CD8-positive, alpha-beta T cell (primary cell): ENCODE measurements at regions of chr10 and their contacts with region 1.

Region 1: DNA sequence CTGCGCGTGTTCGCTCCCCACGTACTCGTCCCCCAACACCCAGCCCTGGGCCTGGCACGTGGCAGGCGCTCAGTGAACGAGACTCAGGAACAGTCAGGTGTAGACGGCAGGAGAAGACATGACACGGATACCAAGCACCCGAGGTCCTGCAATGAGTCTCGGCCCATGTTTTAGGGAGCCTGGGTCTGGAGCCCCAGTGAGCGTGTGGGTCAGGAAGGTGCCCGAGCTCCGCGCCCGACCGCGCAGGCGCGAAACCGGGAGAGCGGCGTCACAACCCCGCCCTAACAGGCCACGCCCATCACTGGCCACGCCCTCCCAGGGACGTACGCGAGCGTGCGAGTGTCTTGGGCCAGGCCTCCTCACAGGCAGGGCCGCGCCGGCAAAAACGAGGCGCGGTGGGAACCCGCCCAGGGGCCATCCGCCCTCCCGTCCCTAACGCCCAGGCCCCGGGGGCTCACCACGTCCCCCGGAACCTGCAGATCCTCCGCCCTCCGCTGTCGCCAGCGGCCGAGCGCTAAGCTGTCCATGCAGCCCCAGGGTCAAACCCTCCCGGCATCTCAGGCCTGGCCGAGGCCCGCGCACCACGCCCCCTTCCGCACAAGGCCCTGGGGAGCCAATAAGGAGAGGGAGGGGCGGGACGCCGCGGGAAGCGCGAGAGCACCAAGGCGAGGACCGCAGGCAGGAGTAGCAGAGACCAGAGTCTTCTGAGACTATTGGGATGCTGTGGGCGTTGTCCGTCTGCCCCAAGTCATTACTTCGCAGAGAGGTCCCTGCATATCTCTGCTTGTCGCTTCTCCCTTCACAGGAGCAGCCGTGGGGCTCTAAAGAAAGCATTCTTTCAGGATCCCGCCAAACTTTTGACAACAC is at the start of gene C10orf143:
- DNase-seq: peak; percentile 96 to 100 (median 98)
- ATAC-seq: peak; percentile 76
- H3K4me3 ChIP-seq: peak within 1 kb of the TSS; percentile 88 to 95
- H3K4me3 Mint-ChIP-seq: peak within 1 kb of the TSS; percentile 99
- H3K27ac ChIP-seq: peak within 1 kb of the TSS; percentile 90 to 96
- H3K27ac Mint-ChIP-seq: peak within 1 kb of the TSS; percentile 97
- H3K4me1 ChIP-seq: peaks cover 18% of the 10 kb centered on the region
- H3K4me1 Mint-ChIP-seq: peaks cover 52% of the 10 kb centered on the region
- H3K27me3 ChIP-seq: no peaks in the 10 kb centered on the region
- H3K27me3 Mint-ChIP-seq: no peaks in the 10 kb centered on the region
- CTCF ChIP-seq: no peak
- total RNA-seq, gene C10orf143: 4.5 to 5.2 TPM

Region 2: GRCh38 chr10:128211953-128212727 is 1898.3 kb before region 1 on chr10:
- CTCF ChIA-PET with region 1: no interaction called
- POLR2A ChIA-PET with region 1: no interaction called
- intact Hi-C with region 1: loop called in 1 of 2 experiments (anchors 5 kb)
- DNase-seq: peak; percentile 68 to 90 (median 81)
- ATAC-seq: peak; percentile 77
- H3K4me3 ChIP-seq: peak overlapping the region; percentile 39 to 43
- H3K4me3 Mint-ChIP-seq: peak overlapping the region; percentile 83
- H3K27ac ChIP-seq: no peak overlapping the region
- H3K27ac Mint-ChIP-seq: peak overlapping the region; percentile 66
- H3K4me1 ChIP-seq: peaks cover 8% of the 10 kb centered on the region
- H3K4me1 Mint-ChIP-seq: peaks cover 16% of the 10 kb centered on the region
- H3K27me3 ChIP-seq: no peaks in the 10 kb centered on the region
- H3K27me3 Mint-ChIP-seq: no peaks in the 10 kb centered on the region
- CTCF ChIP-seq: peak; percentile 95

Region 3: GRCh38 chr10:129466703-129467358 is 643.6 kb before region 1 on chr10 and contains the start of gene MGMT:
- CTCF ChIA-PET with region 1: no interaction called
- POLR2A ChIA-PET with region 1: interaction called, 12 read pairs
- intact Hi-C with region 1: loop called (anchors 1 kb)
- DNase-seq: peak; percentile 96 to 99 (median 98)
- ATAC-seq: peak; percentile 98
- H3K4me3 ChIP-seq: peak within 1 kb of the TSS; percentile 83 to 89
- H3K4me3 Mint-ChIP-seq: peak within 1 kb of the TSS; percentile 85
- H3K27ac ChIP-seq: peak within 1 kb of the TSS; percentile 63 to 78
- H3K27ac Mint-ChIP-seq: peak within 1 kb of the TSS; percentile 86
- H3K4me1 ChIP-seq: peaks cover 17% of the 10 kb centered on the region
- H3K4me1 Mint-ChIP-seq: peaks cover 27% of the 10 kb centered on the region
- H3K27me3 ChIP-seq: no peaks in the 10 kb centered on the region
- H3K27me3 Mint-ChIP-seq: no peaks in the 10 kb centered on the region
- CTCF ChIP-seq: no peak
- total RNA-seq, gene MGMT: 6.4 to 7.0 TPM

Region 4: DNA sequence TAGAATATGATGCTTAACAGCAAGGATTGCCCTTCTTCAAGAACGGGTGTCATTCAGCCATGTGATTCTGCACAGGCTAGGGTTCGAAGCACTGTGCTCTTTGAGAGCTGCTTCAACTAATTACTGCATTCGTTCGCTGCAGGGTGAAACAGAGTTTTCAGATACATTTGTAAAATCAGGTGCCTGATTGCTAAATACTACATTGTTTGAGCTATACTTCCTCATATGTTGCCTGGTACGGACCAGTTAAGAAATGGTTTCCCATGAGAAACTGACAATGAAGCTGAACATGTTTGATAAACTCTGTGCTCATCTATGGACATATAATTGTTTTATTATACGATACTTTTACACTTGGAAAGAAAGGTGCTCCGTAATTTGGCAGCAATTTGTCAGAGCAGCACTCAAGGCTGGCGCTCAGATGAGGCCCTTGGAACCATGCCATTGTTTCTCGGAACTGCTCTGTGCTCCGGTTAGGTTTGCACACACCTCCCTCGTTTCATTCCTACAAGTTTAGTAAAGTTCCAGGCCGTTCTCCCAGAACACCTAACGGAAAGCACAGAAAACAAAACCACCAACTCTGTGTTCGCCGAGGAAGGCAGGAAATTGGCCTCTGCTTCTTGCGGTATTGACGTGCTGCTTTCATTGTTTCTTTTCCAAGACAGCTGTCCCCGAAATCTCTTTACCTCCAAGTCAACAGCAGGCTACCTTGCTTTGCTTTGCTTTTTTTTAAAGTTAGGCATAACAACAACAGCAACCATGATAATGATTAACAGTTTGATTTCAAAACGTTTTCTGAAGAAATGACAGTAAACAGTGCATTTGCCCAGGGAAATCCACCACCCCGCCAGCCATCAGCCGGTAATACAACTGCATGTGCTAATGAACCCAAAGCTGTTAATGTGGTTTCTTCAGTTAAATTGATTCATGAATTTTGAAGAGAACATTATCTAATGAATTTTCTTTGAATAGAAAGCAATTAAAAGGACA is 353.3 kb before region 1 on chr10:
- CTCF ChIA-PET with region 1: no interaction called
- POLR2A ChIA-PET with region 1: no interaction called
- intact Hi-C with region 1: no loop called
- DNase-seq: peak in 2 of 9 experiments; percentile 5 to 34
- ATAC-seq: no peak
- H3K4me3 ChIP-seq: no peak overlapping the region
- H3K4me3 Mint-ChIP-seq: peak overlapping the region; percentile 67
- H3K27ac ChIP-seq: no peak overlapping the region
- H3K27ac Mint-ChIP-seq: no peak overlapping the region
- H3K4me1 ChIP-seq: no peaks in the 10 kb centered on the region
- H3K4me1 Mint-ChIP-seq: peaks cover 18% of the 10 kb centered on the region
- H3K27me3 ChIP-seq: no peaks in the 10 kb centered on the region
- H3K27me3 Mint-ChIP-seq: no peaks in the 10 kb centered on the region
- CTCF ChIP-seq: no peak

Region 5: DNA sequence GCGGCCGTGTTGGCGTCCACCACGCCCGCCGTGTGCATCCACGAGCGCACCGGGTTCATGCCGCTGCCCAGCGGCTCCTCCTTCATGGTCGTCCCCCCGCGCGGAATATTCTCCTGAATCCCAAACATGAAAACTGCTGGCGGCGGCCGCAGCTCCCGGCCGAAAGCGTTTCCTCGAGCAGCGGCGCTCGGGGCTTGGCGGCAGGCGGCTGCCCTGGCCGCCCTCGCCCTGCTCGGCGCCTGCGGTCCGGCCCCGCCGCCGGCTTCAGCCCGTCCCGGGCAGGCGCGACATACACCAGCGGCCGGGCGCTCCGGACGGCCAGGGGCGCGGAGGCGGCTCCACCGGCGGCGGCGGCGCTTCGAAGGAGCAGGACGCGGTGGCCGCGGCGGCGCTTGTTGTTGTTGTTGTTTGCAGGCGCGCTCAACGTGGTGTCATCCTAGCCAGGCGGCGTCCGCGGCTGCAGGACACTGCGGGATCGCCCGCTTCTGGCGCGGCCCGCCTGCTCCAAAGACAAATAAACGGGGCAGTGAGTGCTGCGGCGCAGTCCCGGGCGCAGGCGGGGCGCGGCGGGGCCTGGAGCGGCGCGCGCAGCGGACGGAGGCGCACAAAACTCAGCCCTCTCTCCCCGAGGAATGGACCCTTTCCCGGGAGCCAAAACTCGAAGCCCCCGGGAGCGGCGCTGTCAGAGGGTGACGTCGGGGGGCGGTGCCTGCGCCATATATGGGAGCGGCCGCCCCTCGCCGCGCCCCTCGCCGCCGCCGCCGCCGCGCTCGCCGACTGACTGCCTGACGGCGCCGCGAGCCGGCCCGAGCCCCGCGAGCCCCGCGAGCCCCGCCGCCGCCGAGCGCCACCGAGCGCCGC is 146.6 kb before region 1 on chr10 and contains the start of gene EBF3:
- CTCF ChIA-PET with region 1: no interaction called
- POLR2A ChIA-PET with region 1: no interaction called
- intact Hi-C with region 1: loop called (anchors 5 kb)
- DNase-seq: peak in 6 of 9 experiments; percentile 22 to 61 (median 52)
- ATAC-seq: peak; percentile 83
- H3K4me3 ChIP-seq: peak within 1 kb of the TSS; percentile 28 to 52
- H3K4me3 Mint-ChIP-seq: peak within 1 kb of the TSS; percentile 80
- H3K27ac ChIP-seq: no peak within 1 kb of the TSS
- H3K27ac Mint-ChIP-seq: no peak within 1 kb of the TSS
- H3K4me1 ChIP-seq: peaks cover 23% of the 10 kb centered on the region
- H3K4me1 Mint-ChIP-seq: peaks cover 22% of the 10 kb centered on the region
- H3K27me3 ChIP-seq: peaks cover 29 to 68% of the 10 kb centered on the region in 2 experiments
- H3K27me3 Mint-ChIP-seq: peaks cover 50% of the 10 kb centered on the region
- CTCF ChIP-seq: no peak
- total RNA-seq, gene EBF3: not detected

Region 6: DNA sequence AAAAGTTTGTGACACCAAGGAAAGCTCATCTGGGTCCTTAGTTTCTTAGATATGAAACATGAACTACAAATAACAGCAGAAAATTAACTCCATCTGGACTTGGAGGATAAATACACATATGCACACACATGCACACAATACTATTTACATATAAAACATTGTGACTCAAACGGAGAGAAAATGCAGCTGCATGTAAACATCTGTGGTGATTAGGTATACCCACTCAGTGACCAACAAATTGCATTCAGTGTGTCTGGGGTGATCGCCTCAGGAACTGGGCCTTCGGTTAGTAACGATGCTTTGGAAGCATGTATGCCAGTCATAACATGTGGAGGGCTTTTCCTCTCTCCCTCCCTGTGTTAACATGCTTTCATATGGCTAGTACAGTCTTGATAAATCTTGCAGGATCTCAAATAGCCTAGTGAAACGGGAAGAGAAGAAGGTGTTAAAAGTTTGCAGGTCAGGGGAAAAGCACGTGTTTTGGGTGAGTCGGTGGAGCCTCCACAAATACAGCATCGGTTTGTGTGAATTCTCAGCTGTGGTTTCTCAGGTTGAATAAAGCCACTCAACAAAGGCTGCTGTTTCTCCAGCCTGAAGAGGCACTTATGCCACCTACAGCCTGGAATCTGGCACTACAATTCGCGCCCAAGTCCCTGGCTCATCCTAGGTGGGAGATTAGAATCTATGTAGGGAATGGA is 17.0 kb after region 1 on chr10:
- CTCF ChIA-PET with region 1: interaction called, 45 read pairs
- POLR2A ChIA-PET with region 1: interaction called, 18 read pairs
- intact Hi-C with region 1: loop called (anchors 1 to 2 kb)
- DNase-seq: peak; percentile 16 to 80 (median 50)
- ATAC-seq: peak; percentile 95
- H3K4me3 ChIP-seq: no peak overlapping the region
- H3K4me3 Mint-ChIP-seq: no peak overlapping the region
- H3K27ac ChIP-seq: no peak overlapping the region
- H3K27ac Mint-ChIP-seq: no peak overlapping the region
- H3K4me1 ChIP-seq: peaks cover 4% of the 10 kb centered on the region
- H3K4me1 Mint-ChIP-seq: peaks cover 7% of the 10 kb centered on the region
- H3K27me3 ChIP-seq: no peaks in the 10 kb centered on the region
- H3K27me3 Mint-ChIP-seq: peaks cover 26% of the 10 kb centered on the region
- CTCF ChIP-seq: peak; percentile 75

Region 7: DNA sequence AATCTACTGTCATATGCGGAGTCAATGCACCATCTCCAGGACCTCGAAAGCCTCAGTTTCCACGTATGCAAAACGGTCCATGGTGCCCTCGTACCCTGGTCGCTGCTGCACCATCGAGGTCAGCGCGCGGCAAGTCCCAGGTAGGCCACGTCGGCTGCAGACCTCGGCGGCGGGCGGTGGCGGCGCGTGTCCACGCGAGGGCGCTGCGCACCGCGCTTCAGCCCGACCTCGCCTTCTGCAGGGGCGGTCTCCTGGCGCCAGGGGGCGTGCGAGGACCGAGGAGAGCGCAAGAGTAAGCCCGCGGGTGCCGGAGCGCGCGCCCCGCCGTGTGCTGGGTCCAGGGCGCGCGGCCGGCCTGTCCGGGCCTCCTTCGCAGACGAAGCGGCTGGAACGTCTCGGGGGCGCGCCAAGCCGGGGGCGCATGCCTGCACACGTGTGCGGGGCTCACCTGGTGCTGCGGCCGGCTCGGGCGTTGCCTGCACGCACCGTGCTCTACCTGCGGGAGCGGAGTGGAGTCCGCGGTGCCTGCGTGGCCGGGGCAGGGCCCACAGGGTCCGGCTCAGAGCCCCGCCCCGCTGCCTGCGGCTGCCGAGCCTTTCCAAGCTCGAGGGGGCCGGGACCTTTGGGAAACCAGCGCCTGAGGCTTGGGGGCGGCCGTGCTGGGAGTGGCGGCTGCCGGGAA is 79.7 kb after region 1 on chr10:
- CTCF ChIA-PET with region 1: interaction called, 3 read pairs
- POLR2A ChIA-PET with region 1: no interaction called
- intact Hi-C with region 1: loop called in 1 of 2 experiments (anchors 5 kb)
- DNase-seq: peak; percentile 78 to 93 (median 89)
- ATAC-seq: peak; percentile 98
- H3K4me3 ChIP-seq: peak overlapping the region; percentile 13 to 54
- H3K4me3 Mint-ChIP-seq: peak overlapping the region; percentile 26
- H3K27ac ChIP-seq: no peak overlapping the region
- H3K27ac Mint-ChIP-seq: no peak overlapping the region
- H3K4me1 ChIP-seq: peaks cover 6% of the 10 kb centered on the region
- H3K4me1 Mint-ChIP-seq: peaks cover 3% of the 10 kb centered on the region
- H3K27me3 ChIP-seq: no peaks in the 10 kb centered on the region
- H3K27me3 Mint-ChIP-seq: peaks cover 15% of the 10 kb centered on the region
- CTCF ChIP-seq: peak; percentile 100

Region 8: GRCh38 chr10:131013261-131013912 is 902.9 kb after region 1 on chr10:
- CTCF ChIA-PET with region 1: no interaction called
- POLR2A ChIA-PET with region 1: no interaction called
- intact Hi-C with region 1: no loop called
- DNase-seq: no peak
- ATAC-seq: no peak
- H3K4me3 ChIP-seq: no peak overlapping the region
- H3K4me3 Mint-ChIP-seq: no peak overlapping the region
- H3K27ac ChIP-seq: no peak overlapping the region
- H3K27ac Mint-ChIP-seq: no peak overlapping the region
- H3K4me1 ChIP-seq: no peaks in the 10 kb centered on the region
- H3K4me1 Mint-ChIP-seq: no peaks in the 10 kb centered on the region
- H3K27me3 ChIP-seq: no peaks in the 10 kb centered on the region
- H3K27me3 Mint-ChIP-seq: no peaks in the 10 kb centered on the region
- CTCF ChIP-seq: no peak

Region 9: GRCh38 chr10:131900350-131901146 is 1790.1 kb after region 1 on chr10 and contains the start of gene PPP2R2D:
- CTCF ChIA-PET with region 1: no interaction called
- POLR2A ChIA-PET with region 1: no interaction called
- intact Hi-C with region 1: loop called (anchors 5 to 10 kb)
- DNase-seq: peak; percentile 91 to 97 (median 95)
- ATAC-seq: peak; percentile 83
- H3K4me3 ChIP-seq: peak within 1 kb of the TSS; percentile 65 to 76
- H3K4me3 Mint-ChIP-seq: peak within 1 kb of the TSS; percentile 87
- H3K27ac ChIP-seq: peak within 1 kb of the TSS; percentile 73 to 79
- H3K27ac Mint-ChIP-seq: peak within 1 kb of the TSS; percentile 88
- H3K4me1 ChIP-seq: peaks cover 56% of the 10 kb centered on the region
- H3K4me1 Mint-ChIP-seq: peaks cover 52% of the 10 kb centered on the region
- H3K27me3 ChIP-seq: no peaks in the 10 kb centered on the region
- H3K27me3 Mint-ChIP-seq: no peaks in the 10 kb centered on the region
- CTCF ChIP-seq: no peak
- total RNA-seq, gene PPP2R2D: 28.4 to 28.5 TPM